WTC11 (cell line): ENCODE measurements at regions of chr2 and their contacts with region 1.

Region 1: DNA sequence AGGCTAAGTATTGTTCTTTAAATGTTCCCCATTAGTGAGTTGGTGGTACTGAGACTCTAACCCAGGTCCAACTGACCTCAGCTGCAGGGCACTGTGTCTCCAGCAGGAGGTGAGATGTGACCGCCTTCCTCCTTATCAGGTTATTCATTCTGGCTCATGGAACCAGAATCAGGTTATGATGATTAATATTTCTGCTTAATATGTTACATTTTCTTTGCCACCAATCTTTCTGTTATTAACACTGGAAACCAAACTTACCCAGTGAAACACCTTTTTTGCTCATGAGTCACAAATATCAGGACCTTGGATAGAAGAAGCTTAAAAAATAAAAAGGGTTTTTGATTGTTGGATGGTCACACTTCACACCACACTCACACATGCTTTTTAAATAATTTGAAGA is 85.4 kb downstream of the DPP4 start:
- DNase-seq: peak; percentile 39
- ATAC-seq: peak; percentile 97
- H3K4me3 Mint-ChIP-seq: no peak overlapping the region
- H3K27ac Mint-ChIP-seq: no peak overlapping the region
- H3K4me1 Mint-ChIP-seq: peaks cover 5% of the 10 kb centered on the region
- H3K27me3 Mint-ChIP-seq: no peaks in the 10 kb centered on the region
- CTCF ChIP-seq: peak; percentile 49; the same call in 1 of the 2 replicates

Region 2: DNA sequence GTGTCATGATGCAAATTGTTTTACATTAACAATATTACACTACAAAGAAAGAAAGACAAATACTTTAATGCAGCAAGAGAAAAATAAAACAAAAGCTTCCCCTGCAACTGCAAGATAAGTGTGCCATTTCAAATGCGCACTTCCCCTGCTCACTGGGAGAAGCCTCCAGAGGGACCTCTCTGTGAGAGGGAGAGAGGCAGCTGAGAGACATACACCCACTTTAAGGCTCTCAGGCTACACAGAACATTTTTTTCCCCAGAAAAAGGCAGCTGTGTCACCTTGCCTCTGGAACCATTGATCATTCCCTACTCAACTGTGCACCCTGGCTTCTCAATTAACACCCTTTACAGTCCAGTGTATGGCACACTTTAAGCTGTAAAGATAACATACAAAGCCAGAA is 10.3 kb after region 1 on chr2:
- CTCF ChIA-PET with region 1: interaction called, 14 read pairs
- POLR2A ChIA-PET with region 1: no interaction called
- DNase-seq: no peak
- ATAC-seq: peak; percentile 48
- H3K4me3 Mint-ChIP-seq: no peak overlapping the region
- H3K27ac Mint-ChIP-seq: no peak overlapping the region
- H3K4me1 Mint-ChIP-seq: peaks cover 55% of the 10 kb centered on the region
- H3K27me3 Mint-ChIP-seq: no peaks in the 10 kb centered on the region
- CTCF ChIP-seq: no peak

Region 3: DNA sequence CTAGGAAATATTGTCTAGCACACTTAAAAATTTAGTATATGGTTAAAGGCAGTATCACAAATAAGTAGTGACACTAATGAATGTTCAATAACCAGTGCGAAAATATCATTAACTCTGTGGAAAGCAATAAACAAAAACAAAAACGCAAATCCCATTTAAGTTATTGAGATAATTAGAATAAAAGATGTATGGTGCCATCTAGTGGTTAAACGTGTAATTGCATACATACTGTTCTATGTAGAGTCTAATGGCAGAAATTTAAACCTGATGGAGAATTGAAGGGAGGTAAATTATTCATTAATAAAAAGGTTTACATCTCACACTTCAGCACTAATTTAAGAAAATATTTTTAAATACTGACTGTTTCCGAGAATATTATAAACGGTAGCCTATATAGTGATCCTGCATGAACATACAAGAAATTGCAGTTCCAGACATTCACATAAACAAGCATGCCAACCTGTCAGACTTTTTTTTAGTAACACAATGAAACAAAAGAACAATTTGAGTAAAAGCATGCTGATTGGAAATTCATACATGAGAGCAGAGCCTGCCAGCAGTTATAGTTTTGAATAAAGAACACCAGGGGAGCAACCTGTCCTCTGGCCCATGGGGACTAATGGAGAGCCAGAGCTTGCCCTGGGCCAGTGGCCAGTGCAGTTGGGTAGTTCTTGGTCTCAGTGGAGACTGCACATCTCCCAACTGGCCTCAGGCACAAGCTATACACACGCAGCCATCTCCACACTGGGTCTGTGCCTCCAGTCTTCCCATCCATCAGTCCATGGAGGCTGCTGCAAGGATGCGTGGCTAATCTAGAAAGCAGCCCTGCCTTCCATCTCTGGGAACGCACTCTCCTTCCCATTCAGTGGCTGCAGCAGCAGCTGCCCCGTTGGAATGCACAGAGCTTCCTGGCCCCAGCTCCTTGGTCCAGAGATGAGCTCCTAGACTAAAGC is 135.5 kb after region 1 on chr2:
- CTCF ChIA-PET with region 1: interaction called, 12 read pairs
- POLR2A ChIA-PET with region 1: interaction called, 3 read pairs
- DNase-seq: no peak
- ATAC-seq: peak; percentile 43
- H3K4me3 Mint-ChIP-seq: no peak overlapping the region
- H3K27ac Mint-ChIP-seq: no peak overlapping the region
- H3K4me1 Mint-ChIP-seq: 0 out of 2 replicates have a peak, but pooled peaks cover 4% of the 10 kb centered on the region
- H3K27me3 Mint-ChIP-seq: no peaks in the 10 kb centered on the region
- CTCF ChIP-seq: peak; percentile 55